Activated CD4-positive, alpha-beta memory T cell treated with anti-CD3 and anti-CD28 coated beads, Interleukin-2, amount 10 ng/mL, durations not matched to agents 7 days and 5 days (primary cell): ENCODE measurements at regions of chr22 and their contacts with region 1.

Region 1: GRCh38 chr22:24156913-24157821 is 24.1 kb upstream of the SUSD2 start:
- DNase-seq: peak; percentile 94
- H3K4me3 Mint-ChIP-seq: peak overlapping the region; percentile 85
- H3K27ac Mint-ChIP-seq: peak overlapping the region; percentile 86
- H3K4me1 Mint-ChIP-seq: peaks cover 61% of the 10 kb centered on the region
- H3K27me3 Mint-ChIP-seq: no peaks in the 10 kb centered on the region

Region 2: DNA sequence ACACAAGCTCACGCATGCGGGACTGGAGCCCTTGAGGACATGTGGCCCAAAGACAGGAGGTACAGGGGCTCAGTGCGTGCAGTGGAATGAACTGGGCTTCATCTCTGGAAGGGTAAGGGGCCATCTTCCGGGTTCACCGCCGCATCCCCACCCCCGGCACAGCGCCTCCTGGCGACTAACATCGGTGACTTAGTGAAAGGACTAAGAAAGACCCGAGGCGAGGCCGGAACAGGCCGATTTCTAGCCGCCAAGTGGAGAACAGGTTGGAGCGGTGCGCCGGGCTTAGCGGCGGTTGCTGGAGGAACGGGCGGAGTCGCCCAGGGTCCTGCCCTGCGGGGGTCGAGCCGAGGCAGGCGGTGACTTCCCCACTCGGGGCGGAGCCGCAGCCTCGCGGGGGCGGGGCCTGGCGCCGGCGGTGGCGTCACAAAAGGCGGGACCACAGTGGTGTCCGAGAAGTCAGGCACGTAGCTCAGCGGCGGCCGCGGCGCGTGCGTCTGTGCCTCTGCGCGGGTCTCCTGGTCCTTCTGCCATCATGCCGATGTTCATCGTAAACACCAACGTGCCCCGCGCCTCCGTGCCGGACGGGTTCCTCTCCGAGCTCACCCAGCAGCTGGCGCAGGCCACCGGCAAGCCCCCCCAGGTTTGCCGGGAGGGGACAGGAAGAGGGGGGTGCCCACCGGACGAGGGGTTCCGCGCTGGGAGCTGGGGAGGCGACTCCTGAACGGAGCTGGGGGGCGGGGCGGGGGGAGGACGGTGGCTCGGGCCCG is 263.0 kb before region 1 on chr22 and contains the start of gene MIF:
- CTCF ChIA-PET with region 1: interaction called, 14 read pairs
- POLR2A ChIA-PET with region 1: interaction called, 15 read pairs
- DNase-seq: peak; percentile 98
- H3K4me3 Mint-ChIP-seq: peak within 1 kb of the TSS; percentile 95
- H3K27ac Mint-ChIP-seq: peak within 1 kb of the TSS; percentile 99
- H3K4me1 Mint-ChIP-seq: peaks cover 34% of the 10 kb centered on the region
- H3K27me3 Mint-ChIP-seq: no peaks in the 10 kb centered on the region
- total RNA-seq, gene MIF: 836 to 882 TPM

Region 3: GRCh38 chr22:23970816-23971486 is 186.2 kb before region 1 on chr22:
- CTCF ChIA-PET with region 1: no interaction called
- POLR2A ChIA-PET with region 1: no interaction called
- DNase-seq: no peak
- H3K4me3 Mint-ChIP-seq: no peak overlapping the region
- H3K27ac Mint-ChIP-seq: no peak overlapping the region
- H3K4me1 Mint-ChIP-seq: peaks cover 27% of the 10 kb centered on the region
- H3K27me3 Mint-ChIP-seq: no peaks in the 10 kb centered on the region

Region 4: GRCh38 chr22:24068717-24069297 is 88.4 kb before region 1 on chr22:
- CTCF ChIA-PET with region 1: no interaction called
- POLR2A ChIA-PET with region 1: no interaction called
- DNase-seq: no peak
- H3K4me3 Mint-ChIP-seq: no peak overlapping the region
- H3K27ac Mint-ChIP-seq: no peak overlapping the region
- H3K4me1 Mint-ChIP-seq: peaks cover 4% of the 10 kb centered on the region
- H3K27me3 Mint-ChIP-seq: no peaks in the 10 kb centered on the region

Region 5: DNA sequence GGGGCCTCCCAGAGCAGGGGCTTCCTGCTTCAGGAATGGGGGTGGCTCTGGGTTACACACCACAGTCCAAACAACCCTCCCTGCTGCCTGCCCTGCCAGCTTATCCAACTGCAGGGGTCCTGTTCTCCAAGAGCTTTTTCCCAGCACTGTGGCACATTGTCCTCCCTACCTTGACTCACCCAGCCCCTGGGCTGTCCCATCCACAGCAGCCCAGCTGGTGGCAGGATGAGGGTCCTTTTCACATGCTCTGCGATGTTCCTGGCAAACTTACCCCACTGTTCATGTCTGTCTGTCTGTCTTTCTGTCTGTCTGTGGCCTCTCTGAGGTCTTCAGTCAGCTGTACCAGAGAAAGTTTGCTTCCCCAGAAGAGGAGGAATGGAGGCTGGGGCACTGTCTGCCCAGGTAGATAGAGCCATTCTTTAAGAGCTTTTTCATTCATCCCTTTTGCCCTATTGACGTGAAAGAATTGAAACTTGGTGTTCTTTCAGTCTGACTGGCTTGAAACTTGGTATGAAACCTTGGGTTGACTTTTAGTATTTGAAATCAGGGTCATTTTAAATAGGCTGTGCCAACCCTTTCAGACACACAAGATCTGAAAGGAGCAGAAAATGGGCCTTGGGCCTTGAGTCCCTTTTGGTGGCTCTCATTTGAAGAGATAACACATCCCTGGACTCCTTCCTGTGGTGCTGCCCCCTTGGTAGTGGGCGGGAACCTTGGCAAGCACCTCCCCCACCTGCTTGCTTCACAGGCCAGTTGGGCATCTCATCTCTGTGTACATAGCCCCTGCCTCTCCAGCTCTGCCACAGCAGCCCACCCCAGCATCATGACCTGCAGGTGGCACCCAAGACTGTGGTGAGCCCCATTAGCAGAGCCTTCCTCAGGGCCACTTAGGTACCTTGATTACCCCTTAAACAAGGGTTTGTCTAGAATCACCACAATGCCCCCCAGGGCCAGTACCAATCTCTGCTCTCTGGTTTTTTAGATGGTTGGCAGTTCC is 50.5 kb before region 1 on chr22:
- CTCF ChIA-PET with region 1: interaction called, 27 read pairs
- POLR2A ChIA-PET with region 1: interaction called, 14 read pairs
- DNase-seq: peak; percentile 34
- H3K4me3 Mint-ChIP-seq: no peak overlapping the region
- H3K27ac Mint-ChIP-seq: peak overlapping the region; percentile 77
- H3K4me1 Mint-ChIP-seq: peaks cover 50% of the 10 kb centered on the region
- H3K27me3 Mint-ChIP-seq: no peaks in the 10 kb centered on the region

Region 6: GRCh38 chr22:24140357-24140756 is 16.8 kb before region 1 on chr22:
- CTCF ChIA-PET with region 1: interaction called, 31 read pairs
- POLR2A ChIA-PET with region 1: interaction called, 16 read pairs
- DNase-seq: no peak
- H3K4me3 Mint-ChIP-seq: no peak overlapping the region
- H3K27ac Mint-ChIP-seq: no peak overlapping the region
- H3K4me1 Mint-ChIP-seq: peaks cover 24% of the 10 kb centered on the region
- H3K27me3 Mint-ChIP-seq: no peaks in the 10 kb centered on the region

Region 7: DNA sequence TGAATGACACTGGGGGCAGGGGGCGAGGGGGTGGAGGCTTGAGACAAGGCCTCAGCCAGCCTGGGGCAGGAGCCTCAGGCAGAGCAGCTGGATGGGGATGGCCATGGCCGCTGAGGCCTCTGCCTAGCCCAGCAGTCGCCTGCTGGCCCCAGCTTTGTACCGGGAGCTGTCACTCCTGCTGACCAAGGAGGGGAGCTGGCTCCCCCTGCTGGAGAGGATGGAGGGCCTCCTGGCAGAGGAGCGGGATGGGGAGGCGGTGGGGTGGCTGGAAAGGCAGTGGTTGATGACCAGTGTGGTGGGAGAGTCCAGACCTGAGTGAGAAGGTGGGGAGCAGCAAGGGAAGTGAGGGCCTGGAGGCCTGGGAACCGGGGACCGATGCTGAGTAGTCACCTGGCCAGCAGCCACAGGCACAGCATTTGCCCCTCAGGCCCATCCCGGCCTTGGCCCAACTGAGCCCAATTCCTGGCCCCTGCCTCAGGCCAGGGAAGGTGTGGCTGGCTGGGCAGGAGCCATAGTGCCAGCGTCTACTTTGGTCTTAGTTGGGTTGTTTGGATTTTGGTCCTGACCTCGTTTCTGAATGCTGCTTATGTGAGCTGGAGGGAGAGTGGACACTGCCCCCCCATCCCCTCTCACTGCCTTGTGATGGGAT is 18.1 kb after region 1 on chr22:
- CTCF ChIA-PET with region 1: interaction called, 51 read pairs
- POLR2A ChIA-PET with region 1: interaction called, 7 read pairs
- DNase-seq: peak; percentile 68
- H3K4me3 Mint-ChIP-seq: no peak overlapping the region
- H3K27ac Mint-ChIP-seq: no peak overlapping the region
- H3K4me1 Mint-ChIP-seq: no peaks in the 10 kb centered on the region
- H3K27me3 Mint-ChIP-seq: no peaks in the 10 kb centered on the region